SK-N-SH (cell line): ENCODE measurements at regions of chr15 and their contacts with region 1.

Region 1: DNA sequence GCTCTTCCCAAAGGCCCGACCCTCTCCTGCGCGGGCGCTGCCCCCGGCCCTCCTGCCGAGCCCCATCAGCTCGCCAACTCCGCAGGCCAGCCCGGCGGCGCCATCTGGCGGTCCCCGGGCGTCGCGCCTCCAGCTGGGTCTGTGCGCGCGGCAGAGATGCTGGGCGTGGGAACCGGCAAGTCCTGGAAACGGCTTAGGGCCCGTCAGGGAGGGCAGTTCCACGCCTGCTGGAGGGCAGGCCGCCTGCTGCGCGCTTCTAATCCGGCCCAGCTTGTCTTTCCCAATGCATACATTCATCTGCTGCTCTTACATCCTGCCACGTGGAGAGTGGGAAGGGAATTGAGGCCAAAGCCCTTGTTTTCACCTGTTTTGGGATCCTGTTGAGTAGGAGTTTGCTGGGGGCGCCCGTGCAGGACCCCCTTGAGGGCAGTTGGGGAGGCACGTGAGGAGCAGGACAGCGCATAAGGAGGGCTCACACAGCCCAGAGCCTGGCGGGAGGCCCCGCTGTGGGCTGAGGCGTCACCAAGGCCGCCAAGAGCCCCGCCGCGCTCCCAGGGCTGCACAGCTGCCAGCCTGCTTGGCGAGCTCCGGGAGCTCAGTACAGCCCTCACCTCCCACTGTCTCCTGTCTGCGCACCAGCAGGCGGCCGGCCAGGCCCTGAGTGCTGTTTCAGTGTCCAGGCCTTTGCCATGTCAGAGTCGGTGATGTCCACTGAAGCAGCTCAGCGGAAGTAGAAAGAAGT is 165.6 kb downstream of the NSMCE3 start:
- DNase-seq: no peak
- H3K4me3 ChIP-seq: no peak overlapping the region; a peak in 1 of 4 replicates
- H3K27ac ChIP-seq: no peak overlapping the region
- H3K4me1 ChIP-seq: no peaks in the 10 kb centered on the region
- H3K27me3 ChIP-seq: no peaks in the 10 kb centered on the region
- CTCF ChIP-seq: no peak
- EP300 ChIP-seq: no peak
- RAD21 ChIP-seq: no peak

Region 2: DNA sequence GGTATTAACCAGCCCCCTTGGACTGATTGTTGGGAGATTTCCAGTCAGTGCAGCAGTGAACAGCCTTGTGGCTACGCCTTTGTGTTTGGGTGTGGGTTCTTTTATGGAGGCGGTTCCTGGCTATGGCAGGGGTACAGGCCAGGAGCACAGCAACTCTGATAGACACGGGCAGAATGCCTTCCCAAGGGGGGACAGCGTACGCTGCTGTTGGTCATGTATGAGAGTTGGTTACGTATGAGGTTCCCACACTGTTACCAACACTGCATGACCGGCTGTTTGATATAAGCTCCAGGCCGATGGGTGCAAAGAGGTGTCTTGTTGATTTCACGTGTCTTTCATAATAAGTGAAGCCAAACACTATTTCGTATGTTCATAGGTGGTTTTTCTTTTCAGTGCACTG is 22.2 kb before region 1 on chr15:
- CTCF ChIA-PET with region 1: interaction called, 16 read pairs
- POLR2A ChIA-PET with region 1: no interaction called
- DNase-seq: no peak
- H3K4me3 ChIP-seq: no peak overlapping the region
- H3K27ac ChIP-seq: no peak overlapping the region
- H3K4me1 ChIP-seq: peaks cover 0 to 8% of the 10 kb centered on the region in 2 experiments; a peak in 1 of 4 replicates
- H3K27me3 ChIP-seq: no peaks in the 10 kb centered on the region
- CTCF ChIP-seq: no peak
- EP300 ChIP-seq: no peak
- RAD21 ChIP-seq: no peak

Region 3: GRCh38 chr15:29115093-29115991 is 11.3 kb after region 1 on chr15:
- CTCF ChIA-PET with region 1: interaction called, 45 read pairs
- POLR2A ChIA-PET with region 1: no interaction called
- DNase-seq: peak; percentile 83
- H3K4me3 ChIP-seq: no peak overlapping the region
- H3K27ac ChIP-seq: no peak overlapping the region
- H3K4me1 ChIP-seq: peaks cover 0 to 4% of the 10 kb centered on the region in 2 experiments; a peak in 1 of 4 replicates
- H3K27me3 ChIP-seq: no peaks in the 10 kb centered on the region
- CTCF ChIP-seq: peak; percentile 30; the same call in 1 of the 2 replicates
- EP300 ChIP-seq: no peak
- RAD21 ChIP-seq: no peak

Region 4: GRCh38 chr15:29124581-29125381 is 20.8 kb after region 1 on chr15:
- CTCF ChIA-PET with region 1: interaction called, 12 read pairs
- POLR2A ChIA-PET with region 1: no interaction called
- DNase-seq: no peak
- H3K4me3 ChIP-seq: no peak overlapping the region
- H3K27ac ChIP-seq: no peak overlapping the region
- H3K4me1 ChIP-seq: peaks cover 0 to 15% of the 10 kb centered on the region in 2 experiments; a peak in 1 of 4 replicates
- H3K27me3 ChIP-seq: no peaks in the 10 kb centered on the region
- CTCF ChIP-seq: no peak
- EP300 ChIP-seq: no peak
- RAD21 ChIP-seq: 0 out of 2 replicates have a peak, but pooled peaks have one; percentile 26

Region 5: DNA sequence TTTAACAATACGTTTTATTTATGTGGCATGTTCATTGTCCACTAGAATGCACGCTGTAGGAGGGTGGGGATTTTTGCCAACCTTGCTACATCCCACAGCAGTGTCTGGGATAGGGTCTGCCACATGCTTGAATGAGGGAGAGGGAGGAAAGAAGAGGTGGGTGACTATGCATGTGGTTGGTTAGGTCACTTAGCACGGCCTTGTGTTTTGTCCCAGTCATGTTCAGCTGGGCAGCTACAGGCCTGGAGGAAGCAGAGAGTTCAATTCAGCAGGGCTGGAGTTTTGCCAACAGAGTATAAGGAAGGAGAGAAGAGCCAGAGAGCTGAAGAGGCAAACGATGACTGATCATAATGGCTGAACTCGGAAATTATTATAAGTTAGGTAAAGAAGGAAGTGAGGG is 434.0 kb after region 1 on chr15:
- CTCF ChIA-PET with region 1: no interaction called
- POLR2A ChIA-PET with region 1: no interaction called
- DNase-seq: no peak
- H3K4me3 ChIP-seq: no peak overlapping the region
- H3K27ac ChIP-seq: no peak overlapping the region
- H3K4me1 ChIP-seq: no peaks in the 10 kb centered on the region
- H3K27me3 ChIP-seq: no peaks in the 10 kb centered on the region
- CTCF ChIP-seq: no peak
- EP300 ChIP-seq: no peak
- RAD21 ChIP-seq: no peak